ENCODE measurements at regions of chr10 and their contacts with region 1.

Region 1: GRCh38 chr10:96513698-96514561 is at the start of gene TLL2:
- DNase-seq: peak; percentile 94
- H3K4me3 ChIP-seq: peak within 1 kb of the TSS; percentile 21 to 47 (median 38)
- H3K27ac ChIP-seq: no peak within 1 kb of the TSS
- H3K4me1 ChIP-seq: peaks cover 20% of the 10 kb centered on the region
- H3K27me3 ChIP-seq: peaks cover 16 to 23% of the 10 kb centered on the region in 2 experiments
- CTCF ChIP-seq: peak; percentile 48 to 74
- POLR2A ChIP-seq: no peak
- total RNA-seq, gene TLL2: 0.05 and 0.20 TPM in 2 replicates

Region 2: GRCh38 chr10:96374985-96375830 is 138.7 kb before region 1 on chr10:
- CTCF ChIA-PET with region 1: interaction called, 10 read pairs
- POLR2A ChIA-PET with region 1: no interaction called
- dilution Hi-C with region 1: no loop called
- intact Hi-C with region 1: loop called (anchors 1 kb)
- DNase-seq: peak; percentile 90
- H3K4me3 ChIP-seq: peak overlapping the region in 2 of 3 experiments; percentile 47 to 48
- H3K27ac ChIP-seq: no peak overlapping the region
- H3K4me1 ChIP-seq: no peaks in the 10 kb centered on the region
- H3K27me3 ChIP-seq: peaks cover 0 to 2% of the 10 kb centered on the region in 2 experiments
- CTCF ChIP-seq: peak; percentile 96 to 98
- POLR2A ChIP-seq: no peak

Region 3: GRCh38 chr10:96453856-96454583 is 59.9 kb before region 1 on chr10:
- CTCF ChIA-PET with region 1: no interaction called
- POLR2A ChIA-PET with region 1: no interaction called
- dilution Hi-C with region 1: no loop called
- intact Hi-C with region 1: no loop called
- DNase-seq: no peak
- H3K4me3 ChIP-seq: no peak overlapping the region
- H3K27ac ChIP-seq: no peak overlapping the region
- H3K4me1 ChIP-seq: no peaks in the 10 kb centered on the region
- H3K27me3 ChIP-seq: no peaks in the 10 kb centered on the region
- CTCF ChIP-seq: no peak
- POLR2A ChIP-seq: no peak

Region 4: DNA sequence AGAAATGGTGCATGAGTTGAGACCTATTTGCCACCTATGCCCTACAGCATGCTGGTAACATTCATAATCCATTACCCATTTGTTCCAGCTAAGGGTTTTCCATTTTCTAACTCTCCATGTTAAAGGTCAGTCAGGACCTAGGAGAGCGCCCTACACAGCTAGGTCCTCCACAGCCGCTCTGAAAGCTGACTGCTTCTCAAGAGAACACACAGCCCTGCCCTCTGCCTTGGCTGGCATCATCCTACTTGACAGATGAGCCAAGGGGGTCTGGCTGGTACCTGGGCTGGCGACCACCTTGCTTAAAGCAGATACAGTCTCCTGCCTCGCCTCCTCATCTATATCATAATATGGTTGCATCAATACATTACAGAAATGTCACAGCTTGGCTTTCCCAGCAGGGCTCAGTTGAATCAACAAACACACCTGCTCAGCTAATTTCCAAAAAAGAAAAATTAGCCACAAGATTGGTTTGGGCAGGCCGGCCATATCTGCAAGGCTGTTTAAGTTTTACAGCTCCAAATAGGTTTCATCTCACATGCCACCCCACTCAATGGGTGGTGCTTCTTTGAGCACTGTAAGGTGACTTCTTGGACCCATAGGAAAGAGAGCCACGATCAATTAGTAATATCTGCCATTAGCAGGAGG is 17.5 kb before region 1 on chr10:
- CTCF ChIA-PET with region 1: interaction called, 19 read pairs
- POLR2A ChIA-PET with region 1: no interaction called
- dilution Hi-C with region 1: no loop called
- intact Hi-C with region 1: no loop called
- DNase-seq: peak; percentile 30
- H3K4me3 ChIP-seq: no peak overlapping the region
- H3K27ac ChIP-seq: no peak overlapping the region
- H3K4me1 ChIP-seq: no peaks in the 10 kb centered on the region
- H3K27me3 ChIP-seq: no peaks in the 10 kb centered on the region
- CTCF ChIP-seq: no peak
- POLR2A ChIP-seq: no peak

Region 5: GRCh38 chr10:96524741-96525140 is 10.8 kb after region 1 on chr10:
- CTCF ChIA-PET with region 1: interaction called, 11 read pairs
- POLR2A ChIA-PET with region 1: no interaction called
- dilution Hi-C with region 1: no loop called
- intact Hi-C with region 1: no loop called
- DNase-seq: no peak
- H3K4me3 ChIP-seq: no peak overlapping the region
- H3K27ac ChIP-seq: no peak overlapping the region
- H3K4me1 ChIP-seq: no peaks in the 10 kb centered on the region
- H3K27me3 ChIP-seq: no peaks in the 10 kb centered on the region
- CTCF ChIP-seq: no peak
- POLR2A ChIP-seq: no peak

Region 6: DNA sequence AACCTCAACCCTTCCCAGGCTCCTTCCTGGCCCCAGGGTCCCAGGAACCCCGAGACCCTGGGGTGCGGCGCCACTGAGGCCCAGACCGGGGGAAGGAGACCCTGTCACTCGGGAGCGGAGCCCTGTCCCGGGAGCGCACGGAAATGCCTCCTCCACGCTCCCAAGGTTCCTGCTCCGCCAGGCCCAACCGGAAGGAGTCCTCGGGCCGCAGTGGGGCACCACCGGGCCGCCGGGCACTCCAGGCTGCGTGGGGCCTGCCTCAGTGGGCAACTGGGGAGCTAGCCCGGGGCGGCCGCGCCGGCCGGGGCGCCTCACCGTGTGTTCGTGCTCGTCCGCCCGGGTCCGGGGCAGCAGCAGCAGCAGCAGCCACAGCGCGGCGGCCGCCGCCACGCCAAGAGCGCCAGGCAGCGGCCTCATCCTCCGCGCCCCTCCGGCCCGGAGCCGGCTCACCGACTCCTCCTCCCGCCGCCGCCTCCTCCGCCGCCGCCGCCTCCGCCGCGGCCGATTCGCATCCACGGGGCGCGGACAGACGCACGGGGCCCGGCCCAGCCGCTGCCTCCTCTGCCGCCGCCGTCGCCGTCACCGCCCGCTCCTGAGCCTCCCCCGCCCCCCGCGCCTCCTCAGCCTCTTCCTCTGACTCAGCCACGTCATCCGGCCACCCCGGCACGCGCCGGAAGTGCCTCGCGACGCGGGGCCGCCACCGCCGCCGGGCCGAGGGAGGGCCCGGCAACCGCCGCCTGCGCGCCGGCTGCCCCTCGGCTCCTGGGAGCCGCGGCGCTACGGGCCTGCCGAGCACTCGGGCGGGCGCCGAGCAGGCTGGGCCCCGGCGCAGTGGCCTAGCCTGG is 72.7 kb after region 1 on chr10 and contains the start of gene TM9SF3:
- CTCF ChIA-PET with region 1: interaction called, 7 read pairs
- POLR2A ChIA-PET with region 1: no interaction called
- dilution Hi-C with region 1: no loop called
- intact Hi-C with region 1: loop called (anchors 2 kb)
- DNase-seq: peak; percentile 84
- H3K4me3 ChIP-seq: peak within 1 kb of the TSS; percentile 59 to 92 (median 61)
- H3K27ac ChIP-seq: peak within 1 kb of the TSS; percentile 98
- H3K4me1 ChIP-seq: peaks cover 53% of the 10 kb centered on the region
- H3K27me3 ChIP-seq: no peaks in the 10 kb centered on the region
- CTCF ChIP-seq: no peak
- POLR2A ChIP-seq: peak; percentile 26
- total RNA-seq, gene TM9SF3: 142 and 144 TPM in 2 replicates

Region 7: DNA sequence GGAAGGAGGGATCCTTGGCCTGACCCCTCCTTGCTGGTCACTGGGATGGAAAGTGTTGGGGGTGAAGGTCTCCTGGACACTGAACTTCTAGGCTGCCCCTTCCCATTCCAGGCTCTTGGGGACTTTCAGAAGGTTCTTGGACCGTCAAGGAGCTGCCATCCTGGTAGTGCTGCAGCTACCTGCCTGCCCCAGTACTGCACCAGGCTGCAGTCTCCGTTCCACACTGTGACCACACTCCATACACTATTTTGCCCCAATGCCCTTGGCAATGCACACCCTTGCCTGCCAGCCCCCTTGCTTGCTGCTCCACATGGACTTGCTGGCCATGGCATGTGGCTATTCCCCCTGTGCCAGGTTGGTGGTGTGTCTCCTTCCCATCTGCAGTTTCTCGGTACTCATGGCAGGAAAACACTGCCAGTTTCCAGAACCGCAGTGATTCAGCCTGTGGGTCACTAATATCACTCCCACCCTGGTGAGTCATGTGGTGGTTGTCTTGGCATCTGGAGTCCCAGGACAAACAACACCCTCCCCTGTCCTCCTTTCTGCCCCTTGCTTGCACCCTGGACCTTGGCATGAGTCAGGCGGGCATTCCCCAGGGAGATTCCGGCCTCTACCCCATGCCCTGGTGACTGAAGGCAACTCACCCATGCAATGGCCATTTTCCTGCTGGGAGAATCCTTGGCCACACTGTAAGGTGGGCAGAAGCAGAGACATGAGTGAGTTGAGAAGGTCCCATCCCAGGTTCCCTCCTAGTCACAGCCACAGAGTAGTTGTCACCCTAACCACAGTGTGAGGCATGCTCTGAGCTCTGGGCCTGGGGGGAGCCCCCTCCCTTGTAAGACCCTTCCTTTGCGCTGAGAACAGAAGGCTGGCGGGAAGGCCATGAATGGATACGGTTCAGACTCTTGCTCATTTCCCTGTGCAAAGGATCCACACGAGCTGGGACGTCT is 1368.5 kb after region 1 on chr10:
- CTCF ChIA-PET with region 1: no interaction called
- POLR2A ChIA-PET with region 1: no interaction called
- dilution Hi-C with region 1: no loop called
- intact Hi-C with region 1: loop called (anchors 5 kb)
- DNase-seq: peak; percentile 83
- H3K4me3 ChIP-seq: no peak overlapping the region
- H3K27ac ChIP-seq: peak overlapping the region; percentile 26
- H3K4me1 ChIP-seq: peaks cover 9% of the 10 kb centered on the region
- H3K27me3 ChIP-seq: no peaks in the 10 kb centered on the region
- CTCF ChIP-seq: no peak
- POLR2A ChIP-seq: no peak

Measured in endothelial cell of umbilical vein (primary cell).